ENCODE measurements at regions of chr6 and their contacts with region 1.

Region 1: DNA sequence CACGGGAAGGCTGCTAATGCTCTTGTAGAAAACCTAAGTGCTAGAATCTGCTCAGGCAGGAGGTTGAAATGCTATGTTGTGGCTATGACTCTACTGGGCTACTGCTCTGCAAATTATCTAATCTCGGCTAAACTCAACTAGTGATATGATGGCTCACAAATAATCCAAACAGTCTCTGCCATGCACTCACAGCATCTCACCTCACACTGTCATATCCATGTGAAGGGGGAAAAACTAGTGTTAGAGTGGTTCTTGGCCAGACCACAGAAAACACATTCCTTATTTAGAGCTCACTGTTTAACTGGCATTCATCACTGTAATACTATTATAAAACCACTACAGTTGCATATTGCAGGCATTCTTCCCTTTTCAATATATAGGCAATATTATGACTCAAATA is 81.8 kb upstream of the DST start:
- DNase-seq: no peak
- ATAC-seq: peak in 3 of 4 donors; percentile 15 to 32 (median 22)
- H3K4me3 ChIP-seq: no peak overlapping the region
- H3K27ac ChIP-seq: no peak overlapping the region
- H3K4me1 ChIP-seq: peaks cover 33% of the 10 kb centered on the region
- H3K27me3 ChIP-seq: no peaks in the 10 kb centered on the region
- CTCF ChIP-seq: no peak

Region 2: GRCh38 chr6:56699066-56699654 is 25.3 kb before region 1 on chr6:
- intact Hi-C with region 1: no loop called
- DNase-seq: no peak
- ATAC-seq: peak; percentile 54 to 81 (median 66)
- H3K4me3 ChIP-seq: no peak overlapping the region
- H3K27ac ChIP-seq: no peak overlapping the region
- H3K4me1 ChIP-seq: peaks cover 27% of the 10 kb centered on the region
- H3K27me3 ChIP-seq: no peaks in the 10 kb centered on the region
- CTCF ChIP-seq: peak; percentile 64

Region 3: GRCh38 chr6:56757588-56757984 is 33.1 kb after region 1 on chr6:
- intact Hi-C with region 1: loop called (anchors 5 kb)
- DNase-seq: no peak
- ATAC-seq: peak in 3 of 4 donors; percentile 36 to 58 (median 57)
- H3K4me3 ChIP-seq: no peak overlapping the region
- H3K27ac ChIP-seq: no peak overlapping the region
- H3K4me1 ChIP-seq: peaks cover 47% of the 10 kb centered on the region
- H3K27me3 ChIP-seq: no peaks in the 10 kb centered on the region
- CTCF ChIP-seq: peak; percentile 19

Measured in psoas muscle (tissue), 8 donors.